ENCODE measurements at regions of chr16 and their contacts with region 1.

Region 1: GRCh38 chr16:65235339-65236177 is 113.7 kb upstream of the CDH11 start:
- DNase-seq: no peak
- H3K4me3 ChIP-seq: peak overlapping the region in 3 of 4 experiments; percentile 23 to 89 (median 70); a peak in 4 of 8 replicates
- H3K27ac ChIP-seq: peak overlapping the region; percentile 88; the same call in 1 of the 2 replicates
- H3K4me1 ChIP-seq: peaks cover 8 to 14% (median 12%) of the 10 kb centered on the region in 4 experiments; a peak in 6 of 7 replicates
- H3K27me3 ChIP-seq: no peaks in the 10 kb centered on the region
- CTCF ChIP-seq: no peak
- EP300 ChIP-seq: peak in 1 of 2 experiments; percentile 21; a peak in 1 of 3 replicates
- POLR2A ChIP-seq: 0 out of 3 replicates have a peak, but pooled peaks of 1 of the 2 experiments have one; percentile 16
- RAD21 ChIP-seq: no peak

Region 2: DNA sequence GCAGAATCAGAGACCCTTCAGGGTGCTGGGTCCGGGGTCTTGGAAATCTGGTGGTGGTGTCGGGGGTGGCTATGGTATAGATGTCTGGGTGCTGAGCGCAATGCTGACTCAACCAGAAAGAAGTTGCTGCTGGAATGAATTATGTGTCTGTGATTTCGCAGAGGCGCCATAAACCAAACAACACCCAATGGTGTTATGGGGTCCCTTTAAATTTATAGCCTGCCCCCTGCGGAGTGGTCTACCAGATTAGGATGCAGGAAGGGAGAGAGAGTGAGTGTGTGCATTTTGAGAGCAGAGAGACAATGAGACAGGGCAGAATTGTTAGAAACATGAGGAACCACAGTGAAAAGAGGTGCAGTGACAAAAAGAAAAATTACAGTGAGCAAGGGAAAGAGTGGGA is 13.0 kb before region 1 on chr16:
- CTCF ChIA-PET with region 1: interaction called, 4 read pairs
- POLR2A ChIA-PET with region 1: interaction called, 40 read pairs
- DNase-seq: no peak
- H3K4me3 ChIP-seq: no peak overlapping the region
- H3K27ac ChIP-seq: no peak overlapping the region
- H3K4me1 ChIP-seq: peaks cover 0 to 9% (median 3%) of the 10 kb centered on the region in 4 experiments; a peak in 2 of 7 replicates
- H3K27me3 ChIP-seq: no peaks in the 10 kb centered on the region; a peak in 2 of 7 replicates
- CTCF ChIP-seq: no peak
- EP300 ChIP-seq: no peak
- POLR2A ChIP-seq: no peak
- RAD21 ChIP-seq: no peak

Region 3: DNA sequence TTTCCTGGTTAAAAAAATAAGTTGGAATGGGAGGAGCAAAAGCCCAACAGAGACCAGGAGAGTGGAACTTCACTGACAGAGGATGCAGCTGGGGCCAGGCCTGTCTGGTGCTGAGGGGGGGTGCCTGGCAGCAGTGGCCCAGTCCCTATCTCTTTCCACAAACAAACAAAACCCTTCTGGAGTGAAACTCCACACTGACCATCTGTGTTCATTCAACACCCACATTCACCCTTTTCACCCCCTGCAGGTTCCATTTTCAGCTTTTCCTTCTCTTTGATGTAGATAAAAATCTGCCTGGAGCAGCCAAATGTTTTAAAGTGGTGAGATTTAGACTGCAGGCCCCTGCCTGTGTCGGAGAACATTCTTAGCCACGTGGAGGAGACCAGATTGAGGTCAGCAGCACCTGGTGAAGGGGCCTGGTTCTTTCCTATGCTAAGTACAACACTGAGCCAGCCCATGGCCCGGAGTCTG is 47.7 kb after region 1 on chr16:
- CTCF ChIA-PET with region 1: no interaction called
- POLR2A ChIA-PET with region 1: interaction called, 10 read pairs
- DNase-seq: no peak
- H3K4me3 ChIP-seq: no peak overlapping the region
- H3K27ac ChIP-seq: no peak overlapping the region
- H3K4me1 ChIP-seq: peaks cover 9 to 21% (median 17%) of the 10 kb centered on the region in 4 experiments
- H3K27me3 ChIP-seq: no peaks in the 10 kb centered on the region
- CTCF ChIP-seq: no peak
- EP300 ChIP-seq: no peak
- POLR2A ChIP-seq: no peak
- RAD21 ChIP-seq: no peak

Region 4: DNA sequence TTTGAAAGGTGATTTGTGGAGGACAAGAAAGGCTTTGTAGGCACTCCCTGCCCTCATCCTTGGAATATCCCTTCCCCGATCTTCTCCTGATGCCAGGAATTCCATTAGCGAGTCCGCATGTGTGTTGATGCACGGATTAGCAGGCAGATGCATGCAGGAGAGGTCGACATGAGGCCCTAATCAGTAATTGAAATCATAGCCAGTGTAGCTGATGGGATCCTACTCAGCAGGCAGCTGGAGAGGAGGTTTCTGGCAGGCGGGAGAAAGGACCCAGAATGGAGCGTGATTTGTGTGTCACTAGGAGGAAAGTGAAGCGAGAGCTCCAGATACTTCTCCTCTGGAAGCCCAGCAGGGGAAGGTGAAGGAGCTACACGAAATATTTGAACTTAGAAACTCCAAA is 82.6 kb after region 1 on chr16:
- CTCF ChIA-PET with region 1: no interaction called
- POLR2A ChIA-PET with region 1: interaction called, 10 read pairs
- DNase-seq: peak in 1 of 2 experiments; percentile 52
- H3K4me3 ChIP-seq: peak overlapping the region in 3 of 4 experiments; percentile 7 to 24 (median 16); a peak in 5 of 8 replicates
- H3K27ac ChIP-seq: no peak overlapping the region
- H3K4me1 ChIP-seq: peaks cover 0 to 18% (median 14%) of the 10 kb centered on the region in 4 experiments; a peak in 5 of 7 replicates
- H3K27me3 ChIP-seq: no peaks in the 10 kb centered on the region
- CTCF ChIP-seq: no peak
- EP300 ChIP-seq: no peak
- POLR2A ChIP-seq: no peak
- RAD21 ChIP-seq: no peak